Activated CD8-positive, alpha-beta memory T cell treated with anti-CD3 and anti-CD28 coated beads, Interleukin-2, amount 10 ng/mL, durations not matched to agents 7 days and 5 days (primary cell): ENCODE measurements at regions of chr12 and their contacts with region 1.

Region 1: DNA sequence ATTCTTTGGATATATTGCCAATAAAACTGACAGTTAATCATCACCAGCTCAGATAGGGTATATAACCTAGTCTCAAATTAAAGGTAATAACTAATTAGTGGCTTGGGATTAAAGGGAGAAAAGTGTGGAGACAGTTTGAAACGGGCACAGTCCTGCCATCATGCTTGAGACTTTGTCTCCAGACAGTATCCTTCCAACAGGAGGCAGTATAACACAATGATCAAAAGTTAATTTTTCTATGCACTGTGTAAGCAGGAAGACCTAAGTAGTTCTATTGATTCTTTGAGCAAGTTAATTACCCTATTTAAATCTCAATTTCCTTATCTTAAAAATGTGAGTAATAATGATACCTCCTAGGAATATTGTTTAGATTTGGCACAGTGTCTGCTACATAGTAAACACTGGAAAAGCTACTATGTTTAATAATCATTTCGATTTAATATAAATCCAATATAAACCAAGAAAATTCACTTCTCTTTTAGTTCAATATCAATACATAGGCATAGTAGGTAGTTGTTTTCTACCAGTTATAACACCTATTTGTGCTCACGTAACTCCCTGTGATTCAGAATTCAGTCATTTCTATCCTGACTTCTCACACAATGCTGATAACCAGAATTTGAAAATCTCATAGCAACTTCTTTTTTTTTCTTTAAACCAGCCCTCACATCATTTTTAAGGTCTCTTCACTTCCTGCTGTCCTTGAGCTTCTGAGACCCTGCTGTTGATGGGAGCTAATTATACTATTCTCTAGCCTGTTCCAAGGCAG is 53.7 kb downstream of the GALNT4 start:
- DNase-seq: no peak
- ATAC-seq: peak; percentile 52
- H3K4me3 Mint-ChIP-seq: no peak overlapping the region
- H3K27ac Mint-ChIP-seq: peak overlapping the region; percentile 80
- H3K4me1 Mint-ChIP-seq: peaks cover 78% of the 10 kb centered on the region
- H3K27me3 Mint-ChIP-seq: no peaks in the 10 kb centered on the region

Region 2: GRCh38 chr12:89352492-89353187 is 118.3 kb before region 1 on chr12 and contains the start of gene DUSP6:
- CTCF ChIA-PET with region 1: interaction called, 11 read pairs
- DNase-seq: peak; percentile 98
- ATAC-seq: peak; percentile 82
- H3K4me3 Mint-ChIP-seq: peak within 1 kb of the TSS; percentile 93
- H3K27ac Mint-ChIP-seq: peak within 1 kb of the TSS; percentile 93
- H3K4me1 Mint-ChIP-seq: peaks cover 38% of the 10 kb centered on the region
- H3K27me3 Mint-ChIP-seq: no peaks in the 10 kb centered on the region
- total RNA-seq, gene DUSP6: 76.3 to 100 TPM

Region 3: GRCh38 chr12:89514751-89515150 is 43.8 kb after region 1 on chr12:
- CTCF ChIA-PET with region 1: interaction called, 11 read pairs
- DNase-seq: peak; percentile 45
- ATAC-seq: peak; percentile 79
- H3K4me3 Mint-ChIP-seq: no peak overlapping the region
- H3K27ac Mint-ChIP-seq: no peak overlapping the region
- H3K4me1 Mint-ChIP-seq: peaks cover 25% of the 10 kb centered on the region
- H3K27me3 Mint-ChIP-seq: no peaks in the 10 kb centered on the region

Region 4: DNA sequence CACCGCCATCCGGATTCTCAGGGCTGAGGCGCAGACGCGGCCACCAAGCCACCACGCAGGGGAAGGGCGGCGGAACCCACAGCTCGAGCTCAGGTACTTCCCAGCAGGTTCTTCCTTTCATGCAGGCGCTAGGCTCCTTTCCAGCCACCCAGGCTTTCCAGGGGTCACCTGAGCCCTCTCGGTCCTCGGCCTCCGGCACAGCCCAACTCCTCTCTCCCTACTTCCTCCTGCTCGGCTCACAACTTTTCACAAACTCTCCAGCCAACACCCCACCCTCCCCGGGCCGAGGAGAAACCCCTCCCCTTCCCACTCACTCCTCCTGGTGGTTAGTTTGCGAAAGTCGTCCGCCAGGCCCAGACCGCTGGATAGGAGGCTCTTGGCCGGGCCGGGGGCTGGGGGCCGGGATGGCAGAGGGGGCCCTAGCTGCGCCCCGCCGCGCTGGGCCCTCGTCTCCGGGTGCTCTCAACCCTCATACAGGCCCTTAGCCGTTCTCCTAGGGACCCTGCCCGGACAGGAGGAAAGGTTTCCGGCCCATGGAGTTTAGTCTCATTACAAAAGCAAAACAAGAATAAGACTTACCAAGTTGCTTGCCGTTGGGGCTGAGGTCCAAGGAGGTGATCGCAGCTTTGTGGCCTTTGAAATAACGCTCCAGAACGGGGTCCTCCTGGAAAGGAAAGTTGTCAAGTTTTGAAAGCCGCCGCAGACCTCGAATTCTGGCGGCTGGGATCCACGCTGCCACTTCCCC is 53.8 kb after region 1 on chr12 and contains the start of gene GALNT4:
- CTCF ChIA-PET with region 1: interaction called, 194 read pairs
- DNase-seq: peak; percentile 89
- ATAC-seq: peak; percentile 73
- H3K4me3 Mint-ChIP-seq: peak within 1 kb of the TSS; percentile 92
- H3K27ac Mint-ChIP-seq: peak within 1 kb of the TSS; percentile 97
- H3K4me1 Mint-ChIP-seq: peaks cover 74% of the 10 kb centered on the region
- H3K27me3 Mint-ChIP-seq: no peaks in the 10 kb centered on the region
- total RNA-seq, gene GALNT4: 16.5 to 17.5 TPM